Dendritic cell treated with granulocyte-macrophage colony-stimulating factor and Interleukin-4, amounts not matched to agents 40 ng/mL and 50 ng/mL, for 4 days (primary cell): ENCODE measurements at regions of chr16 and their contacts with region 1.

Region 1: DNA sequence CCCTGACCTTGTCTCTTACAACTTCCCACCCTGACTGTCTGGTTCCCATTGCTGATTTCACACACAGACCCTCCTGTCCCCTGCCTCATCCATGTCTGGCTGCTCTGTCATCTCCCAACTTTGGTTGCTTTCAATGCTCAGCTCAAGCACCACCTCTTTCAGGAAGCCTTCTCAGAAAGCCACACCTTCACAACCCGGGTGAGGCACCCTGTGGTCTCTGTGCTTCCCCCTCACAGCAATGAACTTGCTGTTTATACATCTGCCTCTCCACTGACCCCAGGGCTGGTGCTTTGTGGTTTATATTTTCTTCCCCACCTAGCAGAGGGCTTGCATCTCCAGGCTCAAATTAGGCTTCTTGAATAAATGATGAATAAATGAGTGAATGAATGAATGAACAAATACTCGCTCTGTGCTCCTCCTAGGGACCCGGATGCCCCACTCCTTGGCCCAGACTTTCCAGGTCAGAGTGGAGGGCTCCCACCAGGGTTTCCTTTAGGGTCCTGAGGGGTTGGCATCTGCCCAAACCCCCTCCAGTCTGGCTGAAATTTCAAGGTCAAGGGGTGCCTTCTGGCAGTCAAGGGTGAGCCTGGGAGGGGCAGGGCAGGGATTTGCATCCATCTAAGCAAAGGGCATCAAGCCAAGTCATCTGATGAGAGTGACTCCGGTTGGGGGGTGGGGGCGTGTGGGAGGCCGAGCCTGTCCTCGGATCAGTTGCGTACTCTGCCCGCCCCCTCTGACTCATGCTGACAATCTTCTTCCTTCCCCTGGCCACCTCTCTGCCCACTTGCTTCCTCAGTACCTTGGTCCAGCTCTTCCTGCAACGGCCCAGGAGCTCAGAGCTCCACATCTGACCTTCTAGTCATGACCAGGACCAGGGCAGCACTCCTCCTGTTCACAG is at the start of gene ITGAX:
- H3K4me3 Mint-ChIP-seq: peak within 1 kb of the TSS; percentile 96
- H3K27ac Mint-ChIP-seq: peak within 1 kb of the TSS; percentile 97
- H3K4me1 Mint-ChIP-seq: peaks cover 92% of the 10 kb centered on the region
- H3K27me3 Mint-ChIP-seq: no peaks in the 10 kb centered on the region

Region 2: DNA sequence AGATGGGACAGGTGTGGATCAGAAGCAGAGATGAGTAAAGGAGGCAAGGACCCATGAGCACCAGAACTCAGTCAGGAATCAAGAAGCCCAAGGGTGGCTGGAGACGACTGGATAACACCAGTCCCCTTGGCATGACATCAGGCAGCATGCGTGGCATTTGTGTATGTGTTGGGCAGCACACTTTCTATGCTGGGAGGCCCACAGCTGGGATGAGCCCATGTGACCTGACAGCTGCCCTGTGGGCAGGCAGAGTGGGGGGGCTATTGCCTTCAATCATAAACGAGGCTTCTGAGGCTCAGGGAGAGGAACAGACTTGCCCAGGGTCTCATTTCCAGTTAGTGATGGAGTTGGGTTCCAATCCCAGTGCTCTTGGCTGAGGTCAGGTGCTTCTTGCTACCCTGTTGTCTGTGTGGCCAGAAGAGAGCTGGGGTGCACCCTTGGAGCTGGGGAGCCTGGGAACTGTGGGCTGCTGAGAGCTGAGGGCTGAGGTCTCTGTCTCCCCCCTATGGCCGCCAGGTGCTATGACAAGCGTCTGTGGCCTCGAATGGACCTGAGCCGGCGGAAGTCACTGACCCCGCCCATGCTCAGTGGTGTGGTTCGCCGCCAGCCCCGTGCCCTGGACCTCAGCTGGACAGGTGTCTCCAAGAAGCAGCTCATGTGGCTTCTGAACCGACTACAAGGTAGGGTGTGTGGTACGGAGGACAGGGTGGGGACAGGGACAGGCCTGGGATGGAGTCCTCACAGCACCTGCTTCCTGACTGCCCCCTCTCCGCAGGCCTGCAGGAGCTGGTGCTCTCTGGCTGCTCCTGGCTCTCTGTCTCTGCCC is 412.8 kb before region 1 on chr16:
- intact Hi-C with region 1: no loop called
- H3K4me3 Mint-ChIP-seq: no peak overlapping the region
- H3K27ac Mint-ChIP-seq: peak overlapping the region; percentile 53
- H3K4me1 Mint-ChIP-seq: peaks cover 29% of the 10 kb centered on the region
- H3K27me3 Mint-ChIP-seq: no peaks in the 10 kb centered on the region

Region 3: DNA sequence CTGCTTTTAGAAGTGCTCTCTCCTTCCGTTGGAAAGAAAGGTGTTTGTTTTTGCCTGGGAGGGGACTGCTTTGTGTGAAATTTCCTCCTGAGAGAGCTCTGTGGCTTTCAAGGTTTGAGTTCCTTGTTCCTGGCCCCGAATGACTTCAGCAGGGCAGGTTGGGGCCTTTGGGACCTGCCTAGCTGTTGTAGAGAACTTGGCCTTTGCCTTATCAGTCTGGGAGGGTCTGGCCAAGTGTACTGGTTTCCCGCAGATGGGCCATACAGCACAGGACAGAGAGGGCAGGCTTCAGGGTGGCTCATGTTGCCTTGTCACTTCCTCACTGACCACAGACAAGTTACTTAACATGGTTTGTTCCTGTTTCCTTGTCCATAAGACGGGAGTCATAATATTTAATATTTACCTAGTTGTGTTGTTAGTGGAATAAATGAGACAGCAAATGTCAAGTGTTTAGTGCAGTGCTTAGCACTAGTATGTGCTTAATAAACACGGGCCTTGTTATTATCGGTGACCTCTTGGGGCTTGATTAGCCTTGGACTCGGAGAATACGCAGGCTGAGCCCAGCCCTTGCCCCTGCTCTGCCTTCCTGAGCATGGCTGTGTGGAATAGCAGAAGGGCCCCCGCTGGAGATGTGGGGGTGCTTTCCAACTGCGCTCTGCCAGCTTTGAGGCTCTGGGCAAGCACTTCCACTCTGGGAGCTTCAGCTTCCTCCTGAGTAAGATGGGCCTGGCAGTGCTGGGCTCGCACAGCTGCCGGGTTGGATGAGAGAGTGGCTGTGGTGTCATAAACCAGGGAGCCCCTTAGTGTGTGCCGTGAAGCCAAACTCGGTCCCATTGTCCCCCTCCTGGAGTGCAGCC is 225.7 kb before region 1 on chr16:
- intact Hi-C with region 1: loop called (anchors 5 kb)
- H3K4me3 Mint-ChIP-seq: peak overlapping the region; percentile 71
- H3K27ac Mint-ChIP-seq: peak overlapping the region; percentile 94
- H3K4me1 Mint-ChIP-seq: peaks cover 89% of the 10 kb centered on the region
- H3K27me3 Mint-ChIP-seq: no peaks in the 10 kb centered on the region

Region 4: GRCh38 chr16:31179747-31180459 is 174.7 kb before region 1 on chr16 and contains the start of gene FUS:
- intact Hi-C with region 1: loop called (anchors 10 kb)
- H3K4me3 Mint-ChIP-seq: peak within 1 kb of the TSS; percentile 98
- H3K27ac Mint-ChIP-seq: peak within 1 kb of the TSS; percentile 100
- H3K4me1 Mint-ChIP-seq: peaks cover 60% of the 10 kb centered on the region
- H3K27me3 Mint-ChIP-seq: peaks cover 8% of the 10 kb centered on the region

Region 5: DNA sequence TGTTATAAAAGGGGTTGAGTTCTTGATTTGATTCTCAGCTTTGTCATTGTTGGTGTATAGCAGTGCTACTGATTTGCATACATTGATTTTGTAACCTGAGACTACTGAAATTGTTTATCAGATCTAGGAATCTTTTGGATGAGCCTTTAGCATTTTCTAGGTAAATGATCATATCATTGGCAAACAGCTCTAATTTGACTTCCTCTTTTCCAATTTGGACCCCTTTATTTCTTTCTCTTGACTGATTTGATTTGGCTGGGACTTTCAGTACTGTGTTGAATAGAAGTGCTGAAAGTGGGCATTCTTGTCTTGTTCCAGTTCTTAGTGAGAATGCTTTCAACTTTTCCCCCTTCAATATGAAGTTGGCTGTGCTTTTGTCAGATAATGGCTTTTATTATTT is 49.4 kb before region 1 on chr16:
- intact Hi-C with region 1: no loop called
- H3K4me3 Mint-ChIP-seq: no peak overlapping the region
- H3K27ac Mint-ChIP-seq: no peak overlapping the region
- H3K4me1 Mint-ChIP-seq: peaks cover 62% of the 10 kb centered on the region
- H3K27me3 Mint-ChIP-seq: no peaks in the 10 kb centered on the region

Region 6: DNA sequence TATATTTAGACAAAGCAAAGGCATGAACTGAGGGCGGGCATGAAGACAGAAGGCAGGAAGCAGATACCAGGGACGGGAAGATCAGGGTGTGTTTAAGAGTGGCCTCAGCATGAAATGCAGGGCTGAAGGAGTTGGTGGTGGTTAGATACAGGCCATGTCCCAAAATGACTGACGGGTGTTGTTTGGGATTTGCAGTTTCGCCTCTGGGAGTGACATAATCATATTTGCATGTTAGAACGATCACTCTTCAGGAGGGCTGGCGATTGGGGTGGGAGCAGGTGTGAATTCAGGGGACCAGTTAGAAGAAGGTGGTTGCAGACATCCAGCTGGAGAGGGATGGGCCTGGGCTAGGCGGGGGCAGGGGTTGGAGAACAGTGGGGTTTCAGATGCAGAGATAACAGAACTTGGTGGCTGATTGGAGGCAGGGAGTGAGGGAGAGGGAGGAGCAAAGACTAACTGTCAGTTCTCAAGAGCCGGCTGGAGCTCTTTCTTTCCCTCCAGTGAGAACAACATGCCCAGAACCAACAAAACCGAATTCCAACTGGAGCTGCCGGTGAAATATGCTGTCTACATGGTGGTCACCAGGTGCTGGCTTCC is 26.9 kb before region 1 on chr16:
- intact Hi-C with region 1: loop called (anchors 5 kb)
- H3K4me3 Mint-ChIP-seq: no peak overlapping the region
- H3K27ac Mint-ChIP-seq: peak overlapping the region; percentile 33
- H3K4me1 Mint-ChIP-seq: peaks cover 52% of the 10 kb centered on the region
- H3K27me3 Mint-ChIP-seq: no peaks in the 10 kb centered on the region